ENCODE measurements at regions of chr4 and their contacts with region 1.

Region 1: GRCh38 chr4:119628308-119629141 is at the start of gene PDE5A:
- DNase-seq: peak; percentile 56 to 69
- ATAC-seq: peak; percentile 73 to 79
- H3K4me3 ChIP-seq: peak within 1 kb of the TSS; percentile 85 to 98 (median 90)
- H3K27ac ChIP-seq: peak within 1 kb of the TSS; percentile 78 to 88 (median 86)
- H3K4me1 ChIP-seq: peaks cover 6 to 20% of the 10 kb centered on the region in 2 donors
- H3K27me3 ChIP-seq: no peaks in the 10 kb centered on the region
- CTCF ChIP-seq: peak; percentile 72 to 92 (median 83)
- POLR2A ChIP-seq: peak in 1 of 2 donors; percentile 38
- total RNA-seq, gene PDE5A: 5.5 to 9.9 (median 6.0) TPM

Region 2: GRCh38 chr4:119559044-119559647 is 69.4 kb before region 1 on chr4:
- in situ Hi-C with region 1: no loop called
- intact Hi-C with region 1: loop called (anchors 1 kb)
- DNase-seq: no peak
- ATAC-seq: peak in 1 of 2 donors; percentile 21
- H3K4me3 ChIP-seq: no peak overlapping the region
- H3K27ac ChIP-seq: no peak overlapping the region
- H3K4me1 ChIP-seq: no peaks in the 10 kb centered on the region
- H3K27me3 ChIP-seq: no peaks in the 10 kb centered on the region
- CTCF ChIP-seq: peak; percentile 37 to 57 (median 44)
- POLR2A ChIP-seq: no peak

Region 3: DNA sequence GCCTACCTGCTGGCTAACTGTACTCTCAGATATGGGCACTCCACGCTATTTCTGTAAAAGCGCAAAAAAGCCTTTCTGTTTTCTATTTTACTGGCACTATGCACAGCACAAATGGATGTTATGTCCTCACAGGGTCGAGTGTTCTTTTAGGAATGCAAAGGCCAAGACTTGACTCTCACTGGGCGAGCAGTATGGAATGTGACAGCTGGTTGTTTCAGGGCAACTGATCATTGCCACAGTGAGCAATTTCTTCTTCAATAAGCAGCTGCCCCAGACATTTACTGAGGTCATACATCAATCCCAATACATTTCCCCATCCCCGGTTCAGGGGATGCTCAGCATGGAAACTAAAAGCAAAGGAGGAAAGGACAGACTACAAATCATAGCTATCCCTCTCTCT is 58.1 kb before region 1 on chr4:
- in situ Hi-C with region 1: loop called in 1 of 4 experiments (anchors 10 kb)
- intact Hi-C with region 1: no loop called
- DNase-seq: no peak
- ATAC-seq: no peak
- H3K4me3 ChIP-seq: no peak overlapping the region
- H3K27ac ChIP-seq: peak overlapping the region in 3 of 4 donors; percentile 4 to 32 (median 10)
- H3K4me1 ChIP-seq: peaks cover 0 to 5% of the 10 kb centered on the region in 2 donors
- H3K27me3 ChIP-seq: no peaks in the 10 kb centered on the region
- CTCF ChIP-seq: no peak
- POLR2A ChIP-seq: no peak

Region 4: GRCh38 chr4:119589165-119589564 is 39.4 kb before region 1 on chr4:
- in situ Hi-C with region 1: no loop called
- intact Hi-C with region 1: loop called (anchors 2 kb)
- DNase-seq: no peak
- ATAC-seq: peak; percentile 99
- H3K4me3 ChIP-seq: no peak overlapping the region
- H3K27ac ChIP-seq: peak overlapping the region; percentile 64 to 76 (median 72)
- H3K4me1 ChIP-seq: peaks cover 34 to 35% of the 10 kb centered on the region in 2 donors
- H3K27me3 ChIP-seq: no peaks in the 10 kb centered on the region
- CTCF ChIP-seq: no peak
- POLR2A ChIP-seq: no peak

Region 5: DNA sequence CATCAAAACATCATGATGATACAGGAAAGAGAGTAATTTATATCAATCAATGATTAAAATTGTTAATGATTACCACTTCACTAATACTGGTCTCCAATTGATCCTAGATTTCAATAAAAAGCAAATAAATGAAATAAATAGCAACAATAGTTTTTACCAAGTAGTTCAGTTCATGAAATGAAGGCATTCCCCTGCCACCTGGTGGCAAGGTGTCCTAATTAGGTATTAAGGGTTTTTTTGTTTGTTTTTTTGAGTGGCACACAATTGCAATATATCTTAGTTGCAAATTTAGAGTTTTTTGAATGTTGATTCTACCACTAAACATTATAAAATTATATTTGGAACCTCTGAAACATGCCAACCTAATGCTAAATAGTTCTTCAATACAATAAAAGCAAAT is 157.4 kb after region 1 on chr4:
- in situ Hi-C with region 1: loop called in 2 of 4 experiments (anchors 10 kb)
- intact Hi-C with region 1: loop called (anchors 1 kb)
- DNase-seq: no peak
- ATAC-seq: peak in 1 of 2 donors; percentile 30
- H3K4me3 ChIP-seq: no peak overlapping the region
- H3K27ac ChIP-seq: no peak overlapping the region
- H3K4me1 ChIP-seq: no peaks in the 10 kb centered on the region
- H3K27me3 ChIP-seq: no peaks in the 10 kb centered on the region
- CTCF ChIP-seq: peak; percentile 31 to 62 (median 43)
- POLR2A ChIP-seq: no peak

Region 6: DNA sequence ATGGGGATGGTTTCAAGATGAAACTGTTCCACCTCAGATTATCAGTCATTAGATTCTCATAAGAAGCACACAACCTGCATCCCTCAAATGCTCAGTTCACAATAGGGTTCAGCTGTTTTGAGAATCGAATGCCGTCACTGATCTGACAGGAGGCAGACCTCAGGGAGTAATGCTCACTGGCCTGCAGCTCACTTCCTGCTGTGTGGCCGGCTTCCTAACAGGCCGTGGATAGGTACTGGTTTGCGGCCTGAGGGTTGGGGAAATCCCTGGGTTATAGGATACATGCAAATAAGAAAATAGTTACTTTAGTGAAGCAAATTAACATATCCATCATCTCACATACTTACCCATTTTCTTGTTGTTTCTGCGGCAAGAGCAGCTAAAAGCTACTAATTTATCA is 277.8 kb after region 1 on chr4:
- in situ Hi-C with region 1: no loop called
- intact Hi-C with region 1: no loop called
- DNase-seq: no peak
- ATAC-seq: no peak
- H3K4me3 ChIP-seq: no peak overlapping the region
- H3K27ac ChIP-seq: no peak overlapping the region
- H3K4me1 ChIP-seq: no peaks in the 10 kb centered on the region
- H3K27me3 ChIP-seq: no peaks in the 10 kb centered on the region
- CTCF ChIP-seq: no peak
- POLR2A ChIP-seq: no peak

Region 7: GRCh38 chr4:120049732-120050494 is 421.4 kb after region 1 on chr4:
- in situ Hi-C with region 1: loop called (anchors 5 to 10 kb)
- intact Hi-C with region 1: loop called (anchors 1 kb)
- DNase-seq: peak; percentile 51 to 73
- ATAC-seq: peak; percentile 90 to 92
- H3K4me3 ChIP-seq: peak overlapping the region in 3 of 4 donors; percentile 10 to 30 (median 29)
- H3K27ac ChIP-seq: peak overlapping the region; percentile 11 to 41 (median 28)
- H3K4me1 ChIP-seq: peaks cover 14 to 19% of the 10 kb centered on the region in 2 donors
- H3K27me3 ChIP-seq: no peaks in the 10 kb centered on the region
- CTCF ChIP-seq: peak; percentile 67 to 84 (median 79)
- POLR2A ChIP-seq: no peak

Measured in gastrocnemius medialis (tissue), 4 donors.